ENCODE measurements at regions of chr17 and their contacts with region 1.

Region 1: GRCh38 chr17:7045909-7046724 is 2.2 kb upstream of the SLC16A11 start:
- DNase-seq: peak; percentile 65
- ATAC-seq: peak; percentile 18
- H3K4me3 Mint-ChIP-seq: peak overlapping the region; percentile 80
- H3K27ac Mint-ChIP-seq: no peak overlapping the region
- H3K4me1 Mint-ChIP-seq: peaks cover 17% of the 10 kb centered on the region
- H3K27me3 Mint-ChIP-seq: peaks cover 52% of the 10 kb centered on the region
- CTCF ChIP-seq: peak; percentile 69

Region 2: GRCh38 chr17:7021993-7022778 is 23.9 kb before region 1 on chr17:
- CTCF ChIA-PET with region 1: interaction called, 11 read pairs
- POLR2A ChIA-PET with region 1: interaction called, 3 read pairs
- DNase-seq: peak; percentile 90
- ATAC-seq: peak; percentile 63
- H3K4me3 Mint-ChIP-seq: peak overlapping the region; percentile 91
- H3K27ac Mint-ChIP-seq: peak overlapping the region; percentile 93
- H3K4me1 Mint-ChIP-seq: peaks cover 51% of the 10 kb centered on the region
- H3K27me3 Mint-ChIP-seq: peaks cover 44% of the 10 kb centered on the region
- CTCF ChIP-seq: peak; percentile 88

Region 3: DNA sequence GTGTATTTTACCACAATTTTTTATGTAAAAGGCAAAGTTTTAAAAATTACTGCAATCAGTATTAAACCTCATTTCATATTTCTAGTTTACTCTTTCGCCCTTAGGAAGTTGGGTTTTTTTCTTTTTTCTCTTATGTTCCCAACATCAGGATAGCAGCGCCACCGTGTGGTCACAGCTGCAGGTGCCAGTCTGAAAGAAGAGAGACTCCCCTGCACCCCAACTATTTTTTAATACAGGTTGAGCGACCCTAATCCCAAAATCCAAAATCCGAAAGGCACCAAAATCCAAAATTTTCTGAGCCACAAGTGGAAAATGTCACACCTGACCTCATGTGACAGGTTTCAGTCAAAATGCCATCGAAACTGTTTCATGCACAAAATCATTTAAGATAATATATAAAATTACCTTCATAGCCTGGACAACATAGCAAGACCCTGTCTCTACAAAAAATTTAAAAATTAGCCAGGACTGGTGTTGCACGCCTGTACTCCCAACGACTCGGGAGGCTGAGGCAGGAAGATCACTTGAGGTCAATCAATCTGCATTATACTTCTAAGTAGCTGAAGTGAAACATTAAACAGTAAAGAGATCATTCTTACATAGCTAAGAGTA is 90.3 kb after region 1 on chr17:
- CTCF ChIA-PET with region 1: interaction called, 105 read pairs
- POLR2A ChIA-PET with region 1: interaction called, 9 read pairs
- DNase-seq: peak; percentile 80
- ATAC-seq: no peak
- H3K4me3 Mint-ChIP-seq: peak overlapping the region; percentile 50
- H3K27ac Mint-ChIP-seq: no peak overlapping the region
- H3K4me1 Mint-ChIP-seq: peaks cover 62% of the 10 kb centered on the region
- H3K27me3 Mint-ChIP-seq: peaks cover 48% of the 10 kb centered on the region
- CTCF ChIP-seq: peak; percentile 83

Region 4: DNA sequence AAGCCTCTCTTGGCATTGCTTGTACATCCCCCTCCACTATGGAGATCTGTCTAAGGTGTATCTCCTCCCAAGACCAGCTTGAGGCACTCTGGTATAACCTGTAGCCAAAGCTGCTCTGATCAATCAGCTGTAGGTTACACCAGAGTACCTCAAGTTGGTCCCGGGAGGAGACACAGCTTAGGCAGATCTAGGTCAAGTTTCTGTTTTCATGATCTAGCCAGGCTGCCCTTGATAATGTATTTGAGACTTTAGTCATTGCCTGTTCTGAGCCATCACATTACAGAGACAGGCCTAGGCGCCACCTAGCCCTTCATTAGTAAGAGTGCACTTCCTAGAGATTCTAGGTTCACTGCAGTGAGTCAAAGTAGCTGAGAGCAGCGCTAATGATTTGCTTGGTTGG is 101.7 kb after region 1 on chr17:
- CTCF ChIA-PET with region 1: interaction called, 17 read pairs
- POLR2A ChIA-PET with region 1: no interaction called
- DNase-seq: no peak
- ATAC-seq: no peak
- H3K4me3 Mint-ChIP-seq: no peak overlapping the region
- H3K27ac Mint-ChIP-seq: no peak overlapping the region
- H3K4me1 Mint-ChIP-seq: peaks cover 17% of the 10 kb centered on the region
- H3K27me3 Mint-ChIP-seq: peaks cover 4% of the 10 kb centered on the region
- CTCF ChIP-seq: no peak

Region 5: DNA sequence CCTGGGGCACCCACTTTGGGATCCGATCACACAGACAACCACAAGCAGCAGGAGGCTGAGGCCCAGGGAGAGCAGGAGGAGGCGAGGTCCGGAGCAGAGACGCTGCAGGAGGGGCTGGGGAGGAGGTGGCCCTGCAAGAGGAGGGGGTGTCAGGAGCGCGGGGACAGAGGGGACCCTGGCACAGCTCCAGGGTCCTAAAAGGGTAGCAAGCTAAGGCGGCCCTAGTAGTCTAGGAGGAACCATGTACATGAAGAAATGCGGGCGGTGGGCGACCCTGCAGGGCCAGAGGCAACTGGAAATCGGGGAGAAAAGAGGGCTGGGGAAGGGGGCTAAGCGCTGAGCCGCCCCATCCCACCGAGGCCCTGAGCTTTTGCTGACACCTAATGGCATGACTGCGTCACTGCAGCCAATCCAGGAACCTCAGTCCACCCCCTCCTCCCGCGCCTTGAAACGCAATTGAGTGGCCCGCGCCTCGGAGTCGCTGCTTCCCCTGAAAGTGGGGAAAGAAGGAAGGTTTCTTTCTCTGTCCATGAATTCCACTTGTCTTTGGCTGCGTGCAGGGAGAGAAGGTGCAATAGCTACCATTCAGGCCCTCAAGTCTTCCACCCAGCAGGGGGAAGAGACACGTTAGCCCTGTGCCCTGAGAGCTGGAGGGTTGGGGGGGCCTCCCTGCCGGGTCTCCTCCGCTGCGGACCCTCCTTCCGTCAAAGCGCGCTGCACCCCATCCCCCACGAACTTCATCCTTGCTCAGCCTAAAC is 131.3 kb after region 1 on chr17:
- CTCF ChIA-PET with region 1: interaction called, 75 read pairs
- POLR2A ChIA-PET with region 1: interaction called, 4 read pairs
- DNase-seq: peak; percentile 85
- ATAC-seq: peak; percentile 68
- H3K4me3 Mint-ChIP-seq: no peak overlapping the region
- H3K27ac Mint-ChIP-seq: peak overlapping the region; percentile 80; the same call in 1 of the 2 replicates
- H3K4me1 Mint-ChIP-seq: peaks cover 12% of the 10 kb centered on the region
- H3K27me3 Mint-ChIP-seq: peaks cover 10% of the 10 kb centered on the region
- CTCF ChIP-seq: peak; percentile 77

Region 6: GRCh38 chr17:7214300-7215135 is 168.4 kb after region 1 on chr17:
- CTCF ChIA-PET with region 1: interaction called, 16 read pairs
- POLR2A ChIA-PET with region 1: no interaction called
- DNase-seq: peak; percentile 100
- ATAC-seq: peak; percentile 77
- H3K4me3 Mint-ChIP-seq: peak overlapping the region; percentile 86
- H3K27ac Mint-ChIP-seq: peak overlapping the region; percentile 98
- H3K4me1 Mint-ChIP-seq: peaks cover 61% of the 10 kb centered on the region
- H3K27me3 Mint-ChIP-seq: peaks cover 4% of the 10 kb centered on the region; the same call in 1 of the 2 replicates
- CTCF ChIP-seq: no peak

Measured in WTC11 (cell line).